Activated B cell treated with CpG ODN at 0.5 μM for 24 hours (primary cell): ENCODE measurements at regions of chr16 and their contacts with region 1.

Region 1: DNA sequence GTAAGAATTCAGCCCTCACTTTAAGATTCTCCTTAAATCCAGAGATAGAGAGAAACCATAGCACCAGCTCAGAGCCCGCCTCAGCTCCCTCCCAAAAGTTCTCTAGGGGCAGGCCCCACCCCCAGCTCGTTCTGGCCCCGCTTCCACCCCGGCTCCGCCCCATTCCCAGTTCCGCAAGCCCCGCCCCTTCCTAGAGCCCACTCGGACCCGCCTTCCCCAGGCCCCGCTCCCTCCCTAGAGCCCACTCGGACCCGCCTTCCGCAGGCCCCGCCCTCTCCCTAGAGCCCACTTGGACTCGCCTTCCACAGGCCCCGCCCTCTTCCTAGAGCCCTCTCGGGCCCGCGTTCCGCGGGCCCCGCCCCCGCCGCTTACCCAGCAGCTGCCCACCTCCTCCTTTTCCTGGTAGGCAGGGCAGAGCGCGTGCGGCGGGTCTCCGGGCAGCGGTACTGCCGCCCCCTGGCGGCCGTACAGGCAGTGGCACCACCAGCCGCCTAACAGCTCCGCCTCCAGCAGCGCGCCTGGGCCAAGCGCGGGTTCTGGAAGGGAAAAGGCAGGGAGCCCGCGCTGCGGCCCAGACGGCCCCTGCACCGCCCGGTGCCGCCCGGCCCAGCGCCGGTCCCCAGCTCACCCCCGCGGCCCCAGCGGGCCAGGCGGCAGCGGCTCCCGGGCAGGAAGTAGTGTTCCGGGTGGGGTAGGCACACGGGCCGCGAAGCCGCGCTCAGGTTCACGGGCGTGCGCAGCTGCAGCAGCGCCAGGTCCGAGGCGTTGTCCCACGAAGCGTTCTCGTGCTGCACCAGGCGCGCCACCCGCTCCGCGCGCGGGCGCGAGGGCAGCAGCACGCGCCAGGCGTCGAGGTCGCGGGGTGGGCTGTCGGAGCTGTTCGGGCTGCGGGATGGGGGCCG is 6.8 kb upstream of the PRSS8 start:
- DNase-seq: peak; percentile 97
- ATAC-seq: peak; percentile 96
- H3K4me3 Mint-ChIP-seq: peak overlapping the region; percentile 65
- H3K27ac Mint-ChIP-seq: peak overlapping the region; percentile 80
- H3K4me1 Mint-ChIP-seq: peaks cover 12% of the 10 kb centered on the region
- H3K27me3 Mint-ChIP-seq: peaks cover 5% of the 10 kb centered on the region
- CTCF ChIP-seq: no peak

Region 2: DNA sequence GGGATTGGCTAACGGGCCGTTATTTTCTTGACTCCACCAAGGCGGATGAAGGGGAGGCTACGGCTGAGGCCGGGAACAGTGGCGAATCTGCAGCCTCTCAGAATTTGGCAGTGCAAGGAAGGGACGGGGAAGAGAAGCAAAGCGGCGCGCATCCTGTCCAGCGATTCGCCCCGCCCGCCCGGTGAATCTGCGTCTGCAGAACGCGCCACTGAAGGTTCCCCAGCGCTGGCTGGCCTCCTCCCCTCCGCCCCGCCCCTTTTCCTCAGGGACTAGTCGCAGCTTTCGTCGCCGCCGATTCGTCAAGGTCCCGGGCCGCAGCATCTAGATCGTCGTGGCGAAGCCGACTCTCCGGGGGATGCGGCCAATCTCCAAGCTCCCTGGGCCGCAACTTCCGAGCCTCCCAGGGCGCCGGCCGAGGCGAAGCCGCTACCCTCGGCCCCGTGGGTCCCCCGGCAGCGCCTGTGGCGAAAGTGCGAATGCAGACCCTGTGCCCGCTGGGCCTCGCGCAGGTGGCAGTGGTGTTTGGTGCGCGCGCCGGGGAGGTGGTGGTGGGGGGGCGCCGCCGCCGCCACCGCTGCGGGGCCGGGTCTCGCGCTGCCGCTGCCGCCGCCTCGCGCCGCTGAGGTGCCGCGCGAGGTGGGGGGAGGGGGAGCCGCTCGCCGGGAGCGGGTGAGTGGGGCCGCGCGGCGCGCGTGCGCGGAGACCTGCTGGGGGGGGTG is 184.7 kb before region 1 on chr16 and contains the start of gene SETD1A:
- CTCF ChIA-PET with region 1: interaction called, 6 read pairs
- POLR2A ChIA-PET with region 1: no interaction called
- intact Hi-C with region 1: loop called (anchors 1 kb)
- DNase-seq: peak; percentile 89
- ATAC-seq: peak; percentile 87
- H3K4me3 Mint-ChIP-seq: peak within 1 kb of the TSS; percentile 95
- H3K27ac Mint-ChIP-seq: peak within 1 kb of the TSS; percentile 99
- H3K4me1 Mint-ChIP-seq: peaks cover 31% of the 10 kb centered on the region
- H3K27me3 Mint-ChIP-seq: no peaks in the 10 kb centered on the region
- CTCF ChIP-seq: no peak
- total RNA-seq, gene SETD1A: 29.6 and 32.8 TPM in 2 replicates

Region 3: GRCh38 chr16:31032736-31033708 is 109.3 kb before region 1 on chr16 and contains the start of gene STX4:
- CTCF ChIA-PET with region 1: no interaction called
- POLR2A ChIA-PET with region 1: interaction called, 9 read pairs
- intact Hi-C with region 1: loop called (anchors 1 kb)
- DNase-seq: peak; percentile 95
- ATAC-seq: peak; percentile 78
- H3K4me3 Mint-ChIP-seq: peak within 1 kb of the TSS; percentile 97
- H3K27ac Mint-ChIP-seq: peak within 1 kb of the TSS; percentile 94
- H3K4me1 Mint-ChIP-seq: peaks cover 17% of the 10 kb centered on the region
- H3K27me3 Mint-ChIP-seq: no peaks in the 10 kb centered on the region
- CTCF ChIP-seq: no peak
- total RNA-seq, gene STX4: 106 and 107 TPM in 2 replicates

Region 4: DNA sequence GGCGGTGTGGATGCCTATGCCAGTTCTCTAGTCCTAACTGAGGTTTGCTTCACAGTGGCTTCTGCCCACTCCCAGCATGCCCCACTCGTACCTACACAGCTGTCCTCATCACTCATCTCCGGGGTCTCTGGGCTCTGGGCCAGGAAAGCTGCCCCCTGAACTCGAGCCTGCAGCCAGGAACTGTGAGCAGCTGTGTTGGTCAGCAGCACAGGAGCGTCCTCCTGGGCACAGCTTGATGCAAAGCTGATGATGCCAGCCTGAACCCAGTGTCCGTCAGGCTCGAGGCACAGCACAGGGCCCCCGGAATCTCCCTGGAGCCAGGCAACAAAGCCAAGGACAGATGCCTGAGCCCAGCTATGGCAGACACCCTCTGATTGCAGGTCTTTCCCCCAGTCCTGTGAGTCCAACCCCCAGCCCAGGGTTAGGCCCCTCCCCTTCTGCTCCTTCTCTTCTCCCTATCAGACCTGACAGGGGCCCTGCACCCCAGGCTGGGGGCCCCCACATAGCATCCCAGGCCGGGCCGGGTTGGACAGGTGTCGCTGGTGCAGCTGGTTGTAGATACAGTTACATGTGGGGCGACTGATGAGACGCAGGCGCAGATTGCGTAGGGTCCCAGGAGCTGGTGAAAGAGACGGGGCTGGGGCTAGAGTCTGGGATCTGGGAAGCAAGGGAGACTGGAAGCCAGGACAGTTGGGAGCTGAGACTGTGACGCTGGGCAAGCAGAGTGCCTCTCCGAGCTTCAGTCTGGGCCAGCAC is 56.3 kb before region 1 on chr16:
- CTCF ChIA-PET with region 1: no interaction called
- POLR2A ChIA-PET with region 1: no interaction called
- intact Hi-C with region 1: no loop called
- DNase-seq: no peak
- ATAC-seq: no peak
- H3K4me3 Mint-ChIP-seq: no peak overlapping the region
- H3K27ac Mint-ChIP-seq: no peak overlapping the region
- H3K4me1 Mint-ChIP-seq: peaks cover 5% of the 10 kb centered on the region
- H3K27me3 Mint-ChIP-seq: no peaks in the 10 kb centered on the region
- CTCF ChIP-seq: no peak

Region 5: GRCh38 chr16:31108035-31108793 is 34.1 kb before region 1 on chr16 and contains the start of gene BCKDK:
- CTCF ChIA-PET with region 1: no interaction called
- POLR2A ChIA-PET with region 1: no interaction called
- intact Hi-C with region 1: loop called (anchors 2 kb)
- DNase-seq: peak; percentile 69
- ATAC-seq: peak; percentile 81
- H3K4me3 Mint-ChIP-seq: peak within 1 kb of the TSS; percentile 83
- H3K27ac Mint-ChIP-seq: peak within 1 kb of the TSS; percentile 77
- H3K4me1 Mint-ChIP-seq: peaks cover 19% of the 10 kb centered on the region
- H3K27me3 Mint-ChIP-seq: no peaks in the 10 kb centered on the region
- CTCF ChIP-seq: no peak
- total RNA-seq, gene BCKDK: 24.8 and 27.3 TPM in 2 replicates

Region 6: DNA sequence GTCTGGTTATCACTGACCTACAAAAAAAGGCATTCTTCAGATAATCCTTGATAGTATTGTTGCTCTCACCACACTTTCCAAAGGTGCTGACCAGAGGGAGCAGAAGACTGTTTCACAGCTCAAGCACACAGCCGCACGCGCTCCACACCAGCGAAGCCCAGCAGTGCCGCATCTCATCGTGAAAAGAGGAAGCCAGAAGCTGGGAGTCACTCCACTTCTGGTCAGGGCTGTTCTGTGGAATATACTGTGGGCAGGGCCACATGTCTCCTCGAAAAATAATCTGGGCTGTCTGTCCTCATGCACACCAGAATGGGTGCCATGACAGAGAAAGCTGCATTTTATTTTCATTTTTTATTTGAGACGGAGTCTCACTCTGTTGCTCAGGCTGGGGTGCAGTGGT is 14.8 kb after region 1 on chr16:
- CTCF ChIA-PET with region 1: interaction called, 11 read pairs
- POLR2A ChIA-PET with region 1: interaction called, 4 read pairs
- intact Hi-C with region 1: no loop called
- DNase-seq: no peak
- ATAC-seq: no peak
- H3K4me3 Mint-ChIP-seq: no peak overlapping the region
- H3K27ac Mint-ChIP-seq: no peak overlapping the region
- H3K4me1 Mint-ChIP-seq: peaks cover 8% of the 10 kb centered on the region
- H3K27me3 Mint-ChIP-seq: peaks cover 2% of the 10 kb centered on the region
- CTCF ChIP-seq: no peak

Region 7: GRCh38 chr16:31260136-31260918 is 118.0 kb after region 1 on chr16:
- CTCF ChIA-PET with region 1: no interaction called
- POLR2A ChIA-PET with region 1: interaction called, 14 read pairs
- intact Hi-C with region 1: no loop called
- DNase-seq: no peak
- ATAC-seq: no peak
- H3K4me3 Mint-ChIP-seq: peak overlapping the region; percentile 85
- H3K27ac Mint-ChIP-seq: peak overlapping the region; percentile 82
- H3K4me1 Mint-ChIP-seq: peaks cover 60% of the 10 kb centered on the region
- H3K27me3 Mint-ChIP-seq: no peaks in the 10 kb centered on the region
- CTCF ChIP-seq: no peak

Region 8: GRCh38 chr16:31472709-31473203 is 330.4 kb after region 1 on chr16:
- CTCF ChIA-PET with region 1: no interaction called
- POLR2A ChIA-PET with region 1: no interaction called
- intact Hi-C with region 1: no loop called
- DNase-seq: no peak
- ATAC-seq: no peak
- H3K4me3 Mint-ChIP-seq: peak overlapping the region; percentile 78
- H3K27ac Mint-ChIP-seq: no peak overlapping the region
- H3K4me1 Mint-ChIP-seq: peaks cover 43% of the 10 kb centered on the region
- H3K27me3 Mint-ChIP-seq: no peaks in the 10 kb centered on the region
- CTCF ChIP-seq: no peak

Region 9: GRCh38 chr16:31641279-31641678 is 498.9 kb after region 1 on chr16:
- CTCF ChIA-PET with region 1: no interaction called
- POLR2A ChIA-PET with region 1: no interaction called
- intact Hi-C with region 1: no loop called
- DNase-seq: no peak
- ATAC-seq: no peak
- H3K4me3 Mint-ChIP-seq: no peak overlapping the region
- H3K27ac Mint-ChIP-seq: no peak overlapping the region
- H3K4me1 Mint-ChIP-seq: no peaks in the 10 kb centered on the region
- H3K27me3 Mint-ChIP-seq: peaks cover 26% of the 10 kb centered on the region
- CTCF ChIP-seq: no peak

Region 10: DNA sequence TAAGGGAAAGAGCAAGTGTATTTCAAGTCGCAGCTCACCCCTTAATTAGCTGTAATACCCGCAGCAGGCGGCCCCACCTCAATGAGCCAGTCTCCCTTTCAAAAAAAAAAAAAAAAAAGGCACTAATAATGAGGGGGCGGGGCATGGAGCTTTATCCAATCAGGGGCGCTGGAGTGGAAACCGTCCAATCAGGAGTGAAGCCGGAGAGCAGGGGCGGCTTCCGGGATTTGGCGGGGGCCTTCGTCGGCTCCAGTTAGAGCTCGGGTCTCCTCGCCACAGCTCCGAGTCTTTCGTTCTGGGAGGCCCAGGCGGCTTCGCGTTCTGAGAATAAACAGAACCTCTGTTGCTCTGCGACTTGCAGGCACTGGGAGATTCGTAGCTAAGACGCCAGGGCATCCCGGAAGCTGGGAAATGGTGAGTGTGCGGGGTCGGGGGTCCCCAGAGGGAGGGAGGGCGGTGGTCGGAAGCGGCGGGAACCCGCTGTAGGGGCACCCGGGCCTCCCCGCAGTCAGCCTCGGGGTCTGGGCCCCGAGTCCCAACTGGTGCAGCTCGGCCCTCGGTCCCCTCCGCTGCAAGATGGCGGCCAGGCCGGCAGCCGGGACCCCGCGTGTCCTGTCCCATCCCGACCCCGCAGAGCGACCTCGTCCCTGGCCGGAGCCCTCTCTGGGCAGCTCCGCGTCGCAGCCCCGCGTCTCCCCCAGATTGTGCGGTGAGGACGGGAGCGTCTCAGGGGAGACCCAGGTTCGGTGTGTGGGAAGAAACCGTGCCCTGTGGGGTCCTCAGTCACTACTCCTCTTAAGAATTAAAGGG is 731.4 kb after region 1 on chr16 and contains the start of gene ZNF267:
- CTCF ChIA-PET with region 1: interaction called, 4 read pairs
- POLR2A ChIA-PET with region 1: interaction called, 3 read pairs
- intact Hi-C with region 1: loop called (anchors 1 kb)
- DNase-seq: peak; percentile 79
- ATAC-seq: peak; percentile 69
- H3K4me3 Mint-ChIP-seq: peak within 1 kb of the TSS; percentile 83
- H3K27ac Mint-ChIP-seq: peak within 1 kb of the TSS; percentile 87
- H3K4me1 Mint-ChIP-seq: peaks cover 83% of the 10 kb centered on the region
- H3K27me3 Mint-ChIP-seq: no peaks in the 10 kb centered on the region
- CTCF ChIP-seq: no peak
- total RNA-seq, gene ZNF267: 93.5 and 99.0 TPM in 2 replicates